Activated CD4-positive, alpha-beta T cell treated with anti-CD3 and anti-CD28 coated beads, Interleukin-2, amount 10 ng/mL, durations not matched to agents 24 days and 14 days (primary cell): ENCODE measurements at regions of chr3 and their contacts with region 1.

Region 1: DNA sequence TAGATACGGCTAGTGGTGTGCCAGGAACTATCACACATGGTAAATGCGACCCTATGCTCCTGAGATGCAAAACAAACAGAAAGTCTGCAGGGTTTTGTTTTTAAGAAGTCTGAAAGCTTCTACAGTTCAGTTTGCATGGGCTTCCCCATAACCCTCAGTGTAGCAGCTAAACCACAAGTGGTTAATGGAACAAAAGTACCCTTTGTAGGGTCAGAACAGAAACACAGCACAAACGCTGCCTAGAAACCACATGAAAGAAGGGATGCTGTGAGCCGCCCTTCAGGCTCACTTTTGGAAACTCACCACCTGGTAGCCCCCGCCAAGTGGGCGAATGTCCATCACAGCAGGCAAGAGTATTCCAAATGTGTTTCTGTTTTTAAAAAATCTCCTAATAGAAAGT is 46.2 kb downstream of the CTDSPL start:
- DNase-seq: peak; percentile 83
- H3K4me3 Mint-ChIP-seq: peak overlapping the region; percentile 43
- H3K27ac Mint-ChIP-seq: peak overlapping the region; percentile 58
- H3K4me1 Mint-ChIP-seq: peaks cover 37% of the 10 kb centered on the region
- H3K27me3 Mint-ChIP-seq: peaks cover 10% of the 10 kb centered on the region

Region 2: DNA sequence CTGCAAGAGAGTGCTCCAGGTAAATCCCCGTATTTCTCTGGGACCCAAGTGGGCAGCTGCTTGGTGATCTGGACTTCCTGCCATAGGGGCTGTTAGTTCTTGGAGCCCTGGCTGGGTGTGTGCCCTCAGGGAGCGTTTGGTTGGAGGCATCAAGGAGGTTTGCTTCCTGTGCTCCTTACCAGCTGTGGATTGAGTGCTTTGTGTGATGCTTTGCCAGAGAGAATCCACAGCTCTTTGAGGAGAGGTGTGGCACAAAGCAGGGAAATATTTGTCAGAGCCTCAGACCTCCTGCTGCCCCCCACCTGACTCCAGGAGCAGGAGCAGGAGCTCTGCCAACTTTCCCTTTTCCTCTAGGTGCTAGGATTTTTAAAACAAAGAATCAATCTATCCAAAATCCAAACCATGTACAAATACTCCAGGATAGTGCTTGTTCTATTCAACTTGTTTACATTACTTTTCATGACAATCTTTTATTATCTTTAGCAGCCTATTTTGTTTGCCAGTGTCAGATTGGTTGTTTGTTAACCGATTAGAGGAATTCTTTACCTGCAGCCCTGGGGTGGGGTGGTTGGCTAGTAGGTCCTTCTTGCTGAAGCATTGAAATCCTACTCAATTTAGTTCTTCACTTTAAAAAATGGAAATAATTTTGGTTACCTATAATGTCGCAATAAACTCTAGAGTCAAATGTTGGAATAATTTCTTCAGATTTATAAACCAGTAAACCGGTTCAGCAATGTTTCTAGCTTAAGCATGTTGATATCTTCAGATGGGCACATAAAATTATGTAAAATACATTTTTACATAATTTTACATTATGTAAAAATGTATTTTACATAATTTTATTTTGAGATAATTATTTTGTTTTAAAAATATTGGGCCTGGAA is 43.7 kb before region 1 on chr3:
- intact Hi-C with region 1: loop called (anchors 2 kb)
- DNase-seq: no peak
- H3K4me3 Mint-ChIP-seq: no peak overlapping the region
- H3K27ac Mint-ChIP-seq: no peak overlapping the region
- H3K4me1 Mint-ChIP-seq: peaks cover 22% of the 10 kb centered on the region
- H3K27me3 Mint-ChIP-seq: peaks cover 51% of the 10 kb centered on the region

Region 3: GRCh38 chr3:37935756-37936666 is 28.1 kb after region 1 on chr3:
- intact Hi-C with region 1: no loop called
- DNase-seq: no peak
- H3K4me3 Mint-ChIP-seq: no peak overlapping the region
- H3K27ac Mint-ChIP-seq: no peak overlapping the region
- H3K4me1 Mint-ChIP-seq: no peaks in the 10 kb centered on the region
- H3K27me3 Mint-ChIP-seq: peaks cover 10% of the 10 kb centered on the region

Region 4: DNA sequence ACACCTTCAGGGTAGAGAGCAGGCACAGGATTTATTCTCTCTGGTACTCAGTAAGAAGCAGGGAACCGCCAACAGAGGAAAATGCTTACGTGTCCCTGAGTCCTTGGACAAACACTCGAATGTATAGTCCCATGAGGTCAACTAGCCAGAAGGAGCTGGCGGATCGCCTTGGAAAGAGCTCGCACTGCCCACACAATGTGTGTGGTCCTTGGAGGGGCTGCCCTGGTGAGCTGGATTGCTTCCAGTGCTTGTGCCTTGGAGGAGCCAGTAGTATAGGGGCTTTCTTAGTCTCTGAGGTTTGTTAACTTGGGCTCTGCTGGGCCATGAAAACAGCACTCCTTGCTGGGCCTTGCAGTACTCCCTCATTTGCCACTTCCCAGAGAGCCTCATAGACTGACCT is 42.0 kb after region 1 on chr3:
- intact Hi-C with region 1: loop called (anchors 5 kb)
- DNase-seq: no peak
- H3K4me3 Mint-ChIP-seq: no peak overlapping the region
- H3K27ac Mint-ChIP-seq: no peak overlapping the region
- H3K4me1 Mint-ChIP-seq: peaks cover 2% of the 10 kb centered on the region
- H3K27me3 Mint-ChIP-seq: no peaks in the 10 kb centered on the region

Region 5: GRCh38 chr3:38029400-38030125 is 121.7 kb after region 1 on chr3 and contains the start of gene PLCD1:
- intact Hi-C with region 1: no loop called
- DNase-seq: peak; percentile 83
- H3K4me3 Mint-ChIP-seq: peak within 1 kb of the TSS; percentile 48
- H3K27ac Mint-ChIP-seq: no peak within 1 kb of the TSS
- H3K4me1 Mint-ChIP-seq: peaks cover 31% of the 10 kb centered on the region
- H3K27me3 Mint-ChIP-seq: peaks cover 27% of the 10 kb centered on the region
- total RNA-seq, gene PLCD1: 4.1 and 4.2 TPM in 2 replicates